ENCODE measurements at regions of chr1 and their contacts with region 1.

Region 1: DNA sequence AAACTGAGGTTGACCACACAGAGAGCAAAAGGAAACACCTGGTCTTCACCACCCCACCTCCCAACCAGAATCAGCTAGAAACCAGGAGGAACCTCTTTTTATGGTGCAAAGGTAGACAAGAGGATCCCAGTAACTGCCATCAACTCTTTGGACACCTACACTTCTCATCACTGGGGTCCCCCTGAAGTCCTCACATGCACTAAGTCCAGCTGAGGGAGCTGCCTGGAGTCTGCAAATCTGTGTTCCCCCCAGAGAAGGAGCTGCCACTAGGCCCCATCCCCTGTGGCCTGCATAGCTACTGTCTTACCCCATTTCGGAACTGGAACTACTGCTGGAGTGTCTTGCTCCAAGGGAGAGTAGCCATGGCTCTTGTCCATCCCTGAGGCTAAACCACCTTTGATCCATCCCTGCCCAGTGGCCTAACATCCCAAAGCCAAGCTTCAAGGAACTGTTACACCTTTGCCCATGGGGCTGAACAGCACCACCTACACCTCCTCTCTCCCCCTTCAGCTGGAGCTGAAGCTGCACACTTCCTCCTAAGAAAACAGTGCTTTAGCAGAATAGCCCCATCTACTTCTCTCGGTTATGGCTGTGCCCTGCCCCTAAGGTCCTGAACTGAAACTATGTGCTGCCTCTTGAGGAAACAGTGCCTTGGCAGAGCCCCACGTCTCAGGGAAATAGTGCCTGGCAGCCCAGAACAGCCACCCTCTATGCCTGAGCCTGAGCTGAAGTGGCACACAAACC is 85.4 kb upstream of the CD53 start:
- DNase-seq: peak; percentile 88
- ATAC-seq: peak; percentile 78
- H3K4me3 ChIP-seq: peak overlapping the region; percentile 9 to 57 (median 40)
- H3K4me3 Mint-ChIP-seq: peak overlapping the region; percentile 75
- H3K27ac ChIP-seq: peak overlapping the region; percentile 63 to 90
- H3K27ac Mint-ChIP-seq: peak overlapping the region; percentile 99
- H3K4me1 ChIP-seq: peaks cover 56% of the 10 kb centered on the region in 2 donors
- H3K4me1 Mint-ChIP-seq: peaks cover 65% of the 10 kb centered on the region
- H3K27me3 ChIP-seq: no peaks in the 10 kb centered on the region
- H3K27me3 Mint-ChIP-seq: no peaks in the 10 kb centered on the region
- CTCF ChIP-seq: no peak

Region 2: DNA sequence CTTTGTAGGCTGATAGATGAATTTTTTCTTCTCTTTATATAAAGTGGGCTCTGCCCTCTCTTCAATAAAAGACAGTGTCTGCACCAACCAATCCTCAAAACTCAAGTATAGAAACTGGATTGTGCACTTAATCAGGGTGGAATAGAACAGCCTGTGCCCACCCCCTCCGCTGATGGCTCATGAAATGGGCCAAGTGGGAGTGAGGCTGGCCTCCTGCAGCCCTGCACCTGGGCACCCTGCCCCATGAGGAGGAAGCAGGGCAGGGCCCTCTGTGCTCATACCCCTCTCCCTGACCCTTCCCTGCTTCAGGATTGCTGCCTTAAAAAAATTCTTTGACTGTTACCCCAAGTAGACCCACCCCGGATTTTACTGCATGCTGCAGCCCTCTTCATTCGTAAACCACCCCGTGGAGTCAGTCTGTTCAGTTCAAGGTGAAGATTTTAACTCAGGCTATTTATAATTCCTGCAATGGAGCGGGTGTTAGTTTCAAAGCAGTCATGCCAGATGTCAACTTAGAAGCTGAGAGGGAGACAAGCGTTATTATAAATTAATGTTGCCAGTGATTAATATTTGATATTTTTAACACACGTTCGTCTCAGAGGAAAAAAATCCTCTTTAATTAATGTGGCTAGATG is 320.7 kb before region 1 on chr1:
- CTCF ChIA-PET with region 1: no interaction called
- POLR2A ChIA-PET with region 1: no interaction called
- intact Hi-C with region 1: no loop called
- DNase-seq: no peak
- ATAC-seq: no peak
- H3K4me3 ChIP-seq: no peak overlapping the region
- H3K4me3 Mint-ChIP-seq: no peak overlapping the region
- H3K27ac ChIP-seq: no peak overlapping the region
- H3K27ac Mint-ChIP-seq: no peak overlapping the region
- H3K4me1 ChIP-seq: no peaks in the 10 kb centered on the region
- H3K4me1 Mint-ChIP-seq: no peaks in the 10 kb centered on the region
- H3K27me3 ChIP-seq: no peaks in the 10 kb centered on the region
- H3K27me3 Mint-ChIP-seq: peaks cover 11% of the 10 kb centered on the region
- CTCF ChIP-seq: no peak

Region 3: DNA sequence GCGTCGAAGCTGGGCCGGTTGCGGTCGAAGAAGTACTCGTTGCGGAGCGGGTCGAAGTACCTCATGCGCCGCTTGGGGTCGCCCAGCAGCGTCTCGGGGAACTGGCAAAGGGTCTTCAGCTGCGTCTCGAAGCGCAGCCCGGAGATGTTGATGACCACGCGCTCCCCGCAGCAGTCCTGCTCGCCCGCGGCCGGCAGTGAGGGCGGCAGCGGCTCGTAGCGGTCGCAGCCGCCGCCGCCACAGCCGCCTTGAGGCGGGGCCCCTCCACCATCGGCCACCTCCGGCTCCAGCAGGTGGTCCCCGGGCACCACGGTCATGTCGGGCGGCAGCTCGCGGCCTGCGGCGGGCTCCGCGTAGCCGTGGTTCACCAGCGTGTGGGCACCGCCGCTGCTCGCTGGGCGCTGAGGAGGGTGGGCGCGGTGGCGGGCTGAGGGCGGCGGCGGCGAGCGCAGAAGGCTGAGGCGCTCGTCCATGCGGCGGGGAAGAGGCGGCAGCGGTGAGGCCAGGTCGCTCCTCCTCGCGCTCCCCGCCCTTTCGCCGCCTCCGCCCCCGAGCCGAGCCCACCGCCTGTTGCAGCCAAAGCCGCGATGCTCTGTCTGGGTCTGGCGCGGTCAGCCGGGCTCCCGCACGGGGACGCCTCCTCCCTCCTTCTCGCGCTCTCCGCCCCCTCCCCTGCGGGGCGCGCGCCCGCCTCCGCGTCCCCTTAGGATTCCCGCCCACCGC is 113.0 kb before region 1 on chr1 and contains the start of gene KCNA3:
- CTCF ChIA-PET with region 1: interaction called, 7 read pairs
- POLR2A ChIA-PET with region 1: interaction called, 4 read pairs
- intact Hi-C with region 1: loop called (anchors 1 kb)
- DNase-seq: peak; percentile 79
- ATAC-seq: peak; percentile 59
- H3K4me3 ChIP-seq: peak within 1 kb of the TSS in 4 of 5 experiments; percentile 50 to 67 (median 62)
- H3K4me3 Mint-ChIP-seq: peak within 1 kb of the TSS; percentile 84
- H3K27ac ChIP-seq: peak within 1 kb of the TSS; percentile 68 to 76
- H3K27ac Mint-ChIP-seq: peak within 1 kb of the TSS; percentile 81
- H3K4me1 ChIP-seq: peaks cover 38 to 43% of the 10 kb centered on the region in 2 donors
- H3K4me1 Mint-ChIP-seq: peaks cover 54% of the 10 kb centered on the region
- H3K27me3 ChIP-seq: no peaks in the 10 kb centered on the region
- H3K27me3 Mint-ChIP-seq: no peaks in the 10 kb centered on the region
- CTCF ChIP-seq: peak; percentile 48
- total RNA-seq, gene KCNA3: 60.0 and 62.5 TPM in 2 replicates

Region 4: DNA sequence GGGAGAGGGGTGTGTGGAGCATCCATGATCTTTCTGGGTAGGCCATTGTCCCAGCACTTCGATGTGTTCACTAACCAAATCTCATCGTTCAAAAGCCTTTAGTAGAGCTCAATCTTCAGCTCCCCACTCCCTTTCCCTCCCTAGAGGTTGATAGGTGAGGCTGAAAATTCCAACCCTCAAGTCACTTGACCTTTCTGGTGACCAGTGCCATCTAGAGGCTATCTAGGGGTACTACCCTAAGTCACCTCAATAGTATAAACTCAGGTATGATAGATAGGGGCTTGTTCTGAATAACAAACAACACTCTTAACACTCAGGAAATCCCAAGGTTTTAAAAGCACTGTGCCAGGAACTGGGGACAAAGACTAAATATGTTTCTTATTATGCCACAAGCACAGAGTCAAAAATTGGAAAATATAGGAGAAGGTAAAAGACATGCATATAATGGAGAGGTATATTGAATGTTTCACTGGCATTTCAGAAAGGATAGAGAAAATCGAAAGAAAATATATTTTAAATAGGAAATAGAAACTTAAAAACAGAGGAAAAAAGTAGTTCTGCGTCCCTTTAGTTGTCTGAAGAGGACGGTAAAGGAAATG is 42.6 kb after region 1 on chr1:
- CTCF ChIA-PET with region 1: interaction called, 146 read pairs
- POLR2A ChIA-PET with region 1: interaction called, 7 read pairs
- intact Hi-C with region 1: loop called (anchors 1 kb)
- DNase-seq: peak; percentile 74
- ATAC-seq: peak; percentile 88
- H3K4me3 ChIP-seq: no peak overlapping the region
- H3K4me3 Mint-ChIP-seq: no peak overlapping the region
- H3K27ac ChIP-seq: no peak overlapping the region
- H3K27ac Mint-ChIP-seq: no peak overlapping the region
- H3K4me1 ChIP-seq: peaks cover 8 to 9% of the 10 kb centered on the region in 2 donors
- H3K4me1 Mint-ChIP-seq: peaks cover 30% of the 10 kb centered on the region
- H3K27me3 ChIP-seq: no peaks in the 10 kb centered on the region
- H3K27me3 Mint-ChIP-seq: no peaks in the 10 kb centered on the region
- CTCF ChIP-seq: peak; percentile 94

Region 5: GRCh38 chr1:110879758-110880606 is 92.5 kb after region 1 on chr1:
- CTCF ChIA-PET with region 1: interaction called, 56 read pairs
- POLR2A ChIA-PET with region 1: interaction called, 8 read pairs
- intact Hi-C with region 1: no loop called
- DNase-seq: peak; percentile 64
- ATAC-seq: peak; percentile 73
- H3K4me3 ChIP-seq: peak overlapping the region in 4 of 5 experiments; percentile 5 to 50 (median 16)
- H3K4me3 Mint-ChIP-seq: peak overlapping the region; percentile 78
- H3K27ac ChIP-seq: peak overlapping the region; percentile 64 to 96
- H3K27ac Mint-ChIP-seq: peak overlapping the region; percentile 93
- H3K4me1 ChIP-seq: peaks cover 57 to 92% of the 10 kb centered on the region in 2 donors
- H3K4me1 Mint-ChIP-seq: peaks cover 87% of the 10 kb centered on the region
- H3K27me3 ChIP-seq: no peaks in the 10 kb centered on the region
- H3K27me3 Mint-ChIP-seq: no peaks in the 10 kb centered on the region
- CTCF ChIP-seq: no peak

Region 6: GRCh38 chr1:110986407-110986891 is 198.9 kb after region 1 on chr1:
- CTCF ChIA-PET with region 1: interaction called, 48 read pairs
- POLR2A ChIA-PET with region 1: no interaction called
- intact Hi-C with region 1: no loop called
- DNase-seq: no peak
- ATAC-seq: no peak
- H3K4me3 ChIP-seq: no peak overlapping the region
- H3K4me3 Mint-ChIP-seq: no peak overlapping the region
- H3K27ac ChIP-seq: no peak overlapping the region
- H3K27ac Mint-ChIP-seq: no peak overlapping the region
- H3K4me1 ChIP-seq: peaks cover 0 to 8% of the 10 kb centered on the region in 2 donors
- H3K4me1 Mint-ChIP-seq: peaks cover 7% of the 10 kb centered on the region
- H3K27me3 ChIP-seq: peaks cover 0 to 10% (median 4%) of the 10 kb centered on the region in 4 experiments
- H3K27me3 Mint-ChIP-seq: peaks cover 25% of the 10 kb centered on the region
- CTCF ChIP-seq: no peak

Measured in B cell (primary cell).